MCF 10A (cell line): ENCODE measurements at regions of chr14 and their contacts with region 1.

Region 1: DNA sequence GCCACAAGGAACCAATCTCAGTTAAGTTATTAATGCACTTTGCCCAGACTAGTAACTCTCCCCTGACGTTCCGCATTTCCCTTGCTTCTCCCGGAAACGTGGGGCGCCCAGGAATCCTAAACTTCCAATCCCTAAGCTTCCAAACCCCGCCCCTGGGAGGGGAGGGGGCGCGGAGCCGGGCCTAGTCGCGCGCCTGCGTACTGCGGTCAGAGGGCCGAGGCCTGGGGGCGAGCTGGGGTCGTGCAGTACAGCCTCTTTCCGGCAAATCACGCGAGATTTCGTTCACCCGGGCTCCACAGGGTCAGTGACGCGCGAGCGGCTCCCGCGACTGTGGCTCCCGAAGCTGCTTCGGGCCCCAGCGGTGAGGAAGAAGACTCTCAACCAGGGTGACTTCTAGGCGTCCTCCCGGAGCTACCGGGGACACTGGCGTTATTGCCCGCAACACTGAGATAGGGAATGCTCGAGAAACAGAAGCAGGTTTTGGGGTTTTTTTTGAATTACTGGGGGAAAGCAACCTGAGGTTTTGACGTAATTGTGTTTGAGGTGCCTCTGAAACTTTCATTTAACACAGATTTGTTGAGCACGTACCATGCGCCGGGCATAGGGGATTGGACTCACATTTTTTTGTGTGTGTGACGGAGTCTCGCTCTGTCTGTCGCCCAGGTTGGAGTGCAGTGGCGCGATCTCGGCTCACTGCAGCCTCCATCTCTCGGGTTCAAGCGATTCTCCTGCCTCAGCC is at the start of gene PTGR2:
- DNase-seq: peak; percentile 97
- H3K4me3 Mint-ChIP-seq: peak within 1 kb of the TSS; percentile 91
- H3K27ac Mint-ChIP-seq: peak within 1 kb of the TSS; percentile 98
- H3K4me1 Mint-ChIP-seq: peaks cover 18% of the 10 kb centered on the region
- H3K27me3 Mint-ChIP-seq: no peaks in the 10 kb centered on the region
- CTCF ChIP-seq: no peak
- total RNA-seq, gene PTGR2: 9.2 and 13.1 TPM in 2 replicates

Region 2: GRCh38 chr14:73713803-73714655 is 137.8 kb before region 1 on chr14 and contains the start of gene PNMA1:
- CTCF ChIA-PET with region 1: no interaction called
- POLR2A ChIA-PET with region 1: interaction called, 11 read pairs
- intact Hi-C with region 1: no loop called
- DNase-seq: peak; percentile 79
- H3K4me3 Mint-ChIP-seq: peak within 1 kb of the TSS; percentile 86
- H3K27ac Mint-ChIP-seq: peak within 1 kb of the TSS; percentile 86
- H3K4me1 Mint-ChIP-seq: peaks cover 31% of the 10 kb centered on the region
- H3K27me3 Mint-ChIP-seq: no peaks in the 10 kb centered on the region
- CTCF ChIP-seq: no peak
- total RNA-seq, gene PNMA1: 43.3 and 46.3 TPM in 2 replicates

Region 3: DNA sequence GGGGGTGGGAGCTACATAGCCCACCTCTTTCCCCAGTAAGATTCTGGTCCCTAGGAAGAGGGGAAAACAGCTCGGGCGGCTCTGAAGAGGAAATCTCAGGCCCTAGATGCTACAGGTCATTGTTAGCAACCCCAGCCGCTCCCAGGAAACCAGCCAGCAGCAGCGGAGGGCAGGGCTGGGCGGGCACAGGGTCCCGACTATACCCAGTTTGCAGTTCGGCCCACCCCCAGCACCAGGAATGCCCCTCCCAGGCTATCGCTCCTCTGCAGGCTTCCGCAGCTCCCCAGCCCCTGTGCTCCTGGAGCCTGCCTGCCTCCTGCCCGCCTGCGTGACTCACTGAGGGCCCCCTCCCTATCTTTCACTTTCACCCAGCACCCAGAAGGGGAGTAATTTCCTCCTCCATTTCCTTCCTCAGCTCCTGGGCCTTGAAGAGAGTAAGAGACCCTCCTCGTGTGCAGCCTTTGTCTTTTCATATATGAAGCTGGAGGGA is 110.4 kb before region 1 on chr14:
- CTCF ChIA-PET with region 1: no interaction called
- POLR2A ChIA-PET with region 1: interaction called, 16 read pairs
- intact Hi-C with region 1: no loop called
- DNase-seq: peak; percentile 84
- H3K4me3 Mint-ChIP-seq: peak overlapping the region; percentile 65
- H3K27ac Mint-ChIP-seq: peak overlapping the region; percentile 92
- H3K4me1 Mint-ChIP-seq: peaks cover 55% of the 10 kb centered on the region
- H3K27me3 Mint-ChIP-seq: no peaks in the 10 kb centered on the region
- CTCF ChIP-seq: no peak

Region 4: DNA sequence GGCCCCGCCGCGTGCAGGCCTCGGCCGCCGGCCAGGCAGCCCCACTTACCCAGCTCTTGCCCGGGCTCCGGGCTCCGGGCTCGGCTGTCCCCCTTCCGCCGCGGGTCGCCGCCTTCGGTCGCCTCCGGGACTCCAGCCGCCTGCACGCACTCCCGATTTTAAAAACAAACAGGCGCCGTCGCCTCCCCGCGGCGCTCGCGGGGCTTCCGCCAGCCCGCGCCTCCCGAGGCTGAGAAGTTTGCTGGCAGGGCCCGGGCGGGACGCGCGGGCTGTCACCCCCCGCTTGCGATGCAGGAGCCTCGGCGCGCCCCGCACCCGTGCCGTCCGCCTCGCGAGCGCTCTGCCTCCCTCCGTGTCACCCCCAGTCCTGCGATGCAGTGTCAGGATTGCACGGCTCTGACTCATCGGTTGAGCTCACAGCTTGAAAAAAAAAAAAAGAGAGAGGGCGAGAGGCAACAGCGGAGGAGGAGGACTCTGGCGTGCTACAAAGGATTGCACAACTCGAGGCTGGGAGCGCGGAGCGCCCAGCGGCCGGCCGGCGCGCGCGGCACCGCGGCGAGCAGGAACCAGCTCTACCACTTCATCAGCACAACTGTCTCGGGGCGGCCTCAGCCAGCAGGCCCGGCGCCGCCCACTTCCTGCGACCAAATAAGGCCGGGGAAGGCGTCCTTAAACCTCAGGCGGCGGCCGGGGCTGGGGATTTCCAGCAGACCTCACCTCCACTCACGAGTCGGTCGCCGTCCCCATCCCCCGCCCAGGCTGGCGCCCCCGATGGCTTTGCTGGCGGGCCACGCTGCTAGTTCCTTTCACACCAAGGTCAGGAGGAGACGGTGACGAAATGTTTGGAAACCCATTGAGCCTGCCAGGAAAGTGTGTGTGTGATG is 91.9 kb before region 1 on chr14:
- CTCF ChIA-PET with region 1: no interaction called
- POLR2A ChIA-PET with region 1: interaction called, 89 read pairs
- intact Hi-C with region 1: no loop called
- DNase-seq: peak; percentile 98
- H3K4me3 Mint-ChIP-seq: peak overlapping the region; percentile 86
- H3K27ac Mint-ChIP-seq: peak overlapping the region; percentile 97
- H3K4me1 Mint-ChIP-seq: peaks cover 35% of the 10 kb centered on the region
- H3K27me3 Mint-ChIP-seq: no peaks in the 10 kb centered on the region
- CTCF ChIP-seq: peak; percentile 5

Region 5: DNA sequence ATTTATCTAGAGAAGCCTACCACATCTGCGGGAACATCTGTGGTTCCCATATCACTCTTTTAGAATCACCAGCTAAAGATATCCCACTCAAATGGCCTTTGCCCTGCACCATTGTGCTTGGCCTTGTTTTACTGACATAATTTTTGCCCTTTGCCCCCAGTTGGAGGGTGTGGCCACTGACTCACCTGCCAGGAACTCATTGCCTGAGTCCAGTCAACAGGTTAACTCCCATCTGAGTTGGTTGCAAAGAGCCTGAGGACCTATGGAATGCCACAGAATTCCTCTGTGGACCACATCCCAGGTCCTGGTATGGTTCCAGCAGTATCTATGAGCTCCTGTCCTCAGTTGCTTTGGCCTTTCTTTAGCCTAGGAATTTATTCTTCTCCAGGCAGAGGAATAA is 55.8 kb before region 1 on chr14:
- CTCF ChIA-PET with region 1: no interaction called
- POLR2A ChIA-PET with region 1: interaction called, 21 read pairs
- intact Hi-C with region 1: no loop called
- DNase-seq: peak; percentile 80
- H3K4me3 Mint-ChIP-seq: no peak overlapping the region
- H3K27ac Mint-ChIP-seq: peak overlapping the region; percentile 64
- H3K4me1 Mint-ChIP-seq: peaks cover 21% of the 10 kb centered on the region
- H3K27me3 Mint-ChIP-seq: no peaks in the 10 kb centered on the region
- CTCF ChIP-seq: no peak

Region 6: DNA sequence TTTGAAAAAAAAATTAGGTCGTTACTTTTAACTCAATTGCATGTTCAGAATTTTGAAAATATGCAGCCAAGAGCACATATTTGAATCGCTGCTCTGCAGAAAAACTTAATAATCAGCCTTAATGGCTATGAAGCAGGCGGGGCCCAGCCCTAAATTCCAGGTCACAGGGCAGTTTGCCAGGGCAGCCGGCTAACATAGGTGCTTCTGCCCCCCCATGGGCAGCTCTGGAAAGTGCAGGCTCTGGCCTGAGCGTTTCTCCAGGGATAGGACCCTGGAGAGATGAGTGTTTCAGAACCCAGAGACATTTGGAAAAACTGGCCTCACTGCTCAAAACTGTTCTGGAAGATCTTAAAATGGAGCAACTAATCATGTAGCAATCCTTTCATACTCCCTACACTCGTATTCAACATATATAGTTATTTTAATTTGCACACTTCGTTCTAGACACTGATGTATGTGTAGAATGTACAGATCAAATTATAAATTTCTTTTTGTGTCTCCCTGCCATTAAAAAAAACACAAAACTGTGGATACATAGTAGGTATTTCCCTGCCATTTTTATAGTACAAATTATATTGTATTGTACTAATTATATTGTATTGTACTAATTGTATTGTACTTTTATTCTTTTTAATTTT is 26.1 kb before region 1 on chr14:
- CTCF ChIA-PET with region 1: interaction called, 3 read pairs
- POLR2A ChIA-PET with region 1: interaction called, 34 read pairs
- intact Hi-C with region 1: no loop called
- DNase-seq: peak; percentile 89
- H3K4me3 Mint-ChIP-seq: no peak overlapping the region
- H3K27ac Mint-ChIP-seq: no peak overlapping the region
- H3K4me1 Mint-ChIP-seq: peaks cover 19% of the 10 kb centered on the region
- H3K27me3 Mint-ChIP-seq: no peaks in the 10 kb centered on the region
- CTCF ChIP-seq: peak; percentile 89

Region 7: DNA sequence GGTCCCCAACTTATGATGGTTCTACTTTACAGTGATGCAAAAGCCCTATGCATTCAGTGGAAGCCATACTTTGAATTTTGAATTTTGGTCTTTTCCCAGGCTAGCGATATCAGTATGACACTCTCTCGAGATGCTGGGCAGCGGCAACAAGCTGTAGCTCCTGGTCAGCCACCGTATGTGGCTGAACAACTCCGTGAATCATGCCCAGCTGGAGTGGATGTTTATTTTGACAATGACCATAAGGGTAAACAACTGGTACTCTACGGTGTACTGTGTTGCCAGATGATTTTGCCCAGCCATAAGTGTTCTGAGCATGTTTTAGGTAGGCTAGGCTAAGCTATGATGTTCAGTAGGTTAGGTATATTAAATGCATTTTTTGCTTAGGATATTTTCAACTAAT is 26.6 kb after region 1 on chr14:
- CTCF ChIA-PET with region 1: no interaction called
- POLR2A ChIA-PET with region 1: interaction called, 14 read pairs
- intact Hi-C with region 1: no loop called
- DNase-seq: peak; percentile 53
- H3K4me3 Mint-ChIP-seq: no peak overlapping the region
- H3K27ac Mint-ChIP-seq: no peak overlapping the region
- H3K4me1 Mint-ChIP-seq: no peaks in the 10 kb centered on the region
- H3K27me3 Mint-ChIP-seq: no peaks in the 10 kb centered on the region
- CTCF ChIP-seq: no peak

Region 8: GRCh38 chr14:73943083-73943482 is 91.3 kb after region 1 on chr14:
- CTCF ChIA-PET with region 1: no interaction called
- POLR2A ChIA-PET with region 1: no interaction called
- intact Hi-C with region 1: no loop called
- DNase-seq: peak; percentile 75
- H3K4me3 Mint-ChIP-seq: no peak overlapping the region
- H3K27ac Mint-ChIP-seq: peak overlapping the region; percentile 5
- H3K4me1 Mint-ChIP-seq: peaks cover 11% of the 10 kb centered on the region
- H3K27me3 Mint-ChIP-seq: no peaks in the 10 kb centered on the region
- CTCF ChIP-seq: no peak